Uterus (tissue), 4 donors: ENCODE measurements at regions of chr16 and their contacts with region 1.

Region 1: DNA sequence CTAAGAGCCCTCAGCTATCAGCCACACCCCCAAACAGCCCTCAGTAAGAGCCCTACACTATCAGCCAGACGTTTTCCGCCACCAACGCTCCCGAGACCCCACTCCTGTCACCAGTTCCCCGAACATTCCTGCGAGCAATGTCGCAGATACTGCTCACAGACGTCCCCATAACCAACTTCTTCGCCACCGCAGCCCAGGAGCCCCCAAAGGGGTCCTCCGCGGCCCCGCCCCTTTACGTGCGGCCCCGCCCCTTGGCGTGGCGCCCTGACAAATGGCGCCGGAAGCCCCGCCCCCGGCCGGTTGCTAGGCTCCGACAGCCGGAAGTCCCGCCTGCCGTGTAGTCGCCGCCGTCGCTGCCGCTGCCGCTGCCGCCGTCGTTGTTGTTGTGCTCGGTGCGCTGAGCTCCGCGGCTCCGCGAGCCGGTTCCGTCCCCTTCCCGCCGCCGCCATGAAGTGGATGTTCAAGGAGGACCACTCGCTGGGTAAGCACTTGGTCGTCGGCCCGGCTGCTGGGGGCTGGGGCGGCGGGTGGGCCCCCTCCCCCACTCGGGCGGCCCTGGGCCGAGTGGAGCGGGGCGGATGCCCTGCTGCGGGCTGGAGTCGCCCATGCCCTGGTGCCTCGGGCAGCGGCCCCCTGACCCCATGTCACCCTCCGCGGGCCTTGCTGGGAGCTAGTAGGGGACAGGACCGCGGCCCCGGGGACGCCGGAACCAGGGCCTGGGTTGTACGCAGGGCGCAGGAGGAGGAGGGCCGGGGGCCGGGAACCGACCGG is at the start of gene GABARAPL2:
- DNase-seq: peak; percentile 74 to 86
- H3K4me3 ChIP-seq: peak within 1 kb of the TSS; percentile 79 to 95
- H3K27ac ChIP-seq: peak within 1 kb of the TSS; percentile 76 to 81
- H3K4me1 ChIP-seq: peaks cover 0 to 10% of the 10 kb centered on the region in 2 donors
- H3K27me3 ChIP-seq: no peaks in the 10 kb centered on the region
- CTCF ChIP-seq: no peak
- POLR2A ChIP-seq: peak; percentile 70 to 88
- total RNA-seq, gene GABARAPL2: 19.0 to 95.9 (median 79.5) TPM

Region 2: DNA sequence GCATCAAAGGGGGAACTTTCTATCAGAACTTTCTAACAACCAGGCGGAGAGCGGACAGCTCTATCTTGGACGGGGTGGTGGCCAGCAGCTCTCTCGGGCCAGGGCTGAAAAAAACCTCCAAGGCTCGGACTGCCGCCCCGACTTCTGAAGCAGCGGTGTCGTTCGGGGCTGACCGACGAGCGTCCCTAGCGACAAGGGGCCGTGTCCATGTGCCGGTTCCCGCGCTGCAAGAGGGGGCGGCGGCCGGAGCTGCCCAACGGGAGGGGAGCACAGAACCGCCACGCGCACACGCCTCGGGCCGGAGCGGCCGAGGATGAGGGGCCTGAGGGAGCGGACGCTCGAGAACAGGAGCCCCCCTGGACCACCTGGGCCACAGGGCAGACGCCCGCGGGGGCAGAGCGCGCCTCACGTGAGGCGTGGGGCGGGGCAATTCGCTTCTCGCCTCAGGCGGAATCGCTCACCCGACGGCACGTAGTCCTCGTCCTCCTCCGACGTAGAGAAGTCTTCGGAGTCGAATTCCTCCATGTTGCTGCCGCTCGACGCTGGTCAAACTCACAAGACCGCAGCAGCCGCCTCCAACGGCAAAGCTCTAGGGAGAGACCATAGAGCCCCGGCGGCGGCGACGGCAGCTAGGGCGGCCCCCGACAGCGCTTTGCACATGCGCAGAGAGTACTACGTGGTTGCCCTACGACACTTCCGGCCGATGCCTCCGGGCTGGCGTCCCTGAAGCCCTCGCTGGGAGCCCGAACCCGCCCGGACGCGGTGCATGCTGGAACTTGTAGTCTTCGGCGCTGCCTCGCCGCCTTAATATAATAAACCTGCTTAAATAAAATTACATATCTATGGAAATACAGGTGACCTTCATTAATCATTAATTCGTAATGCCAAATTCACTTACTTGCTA is 133.1 kb before region 1 on chr16 and contains the start of gene CFDP1:
- intact Hi-C with region 1: no loop called
- DNase-seq: peak; percentile 95 to 96
- H3K4me3 ChIP-seq: peak within 1 kb of the TSS; percentile 76 to 83
- H3K27ac ChIP-seq: peak within 1 kb of the TSS; percentile 94 to 99
- H3K4me1 ChIP-seq: no peaks in the 10 kb centered on the region
- H3K27me3 ChIP-seq: no peaks in the 10 kb centered on the region
- CTCF ChIP-seq: peak in 2 of 4 experiments; percentile 7 to 22
- POLR2A ChIP-seq: peak; percentile 72 to 86
- total RNA-seq, gene CFDP1: 22.3 to 90.8 (median 73.4) TPM

Region 3: GRCh38 chr16:75622761-75623605 is 56.8 kb after region 1 on chr16 and contains the start of gene ADAT1:
- intact Hi-C with region 1: loop called (anchors 10 kb)
- DNase-seq: peak; percentile 98
- H3K4me3 ChIP-seq: peak within 1 kb of the TSS; percentile 54 to 59
- H3K27ac ChIP-seq: peak within 1 kb of the TSS; percentile 82 to 94
- H3K4me1 ChIP-seq: no peaks in the 10 kb centered on the region
- H3K27me3 ChIP-seq: no peaks in the 10 kb centered on the region
- CTCF ChIP-seq: peak in 2 of 4 experiments; percentile 20 to 46
- POLR2A ChIP-seq: peak; percentile 79 to 86
- total RNA-seq, gene ADAT1: 21.8 to 72.2 (median 46.5) TPM

Region 4: DNA sequence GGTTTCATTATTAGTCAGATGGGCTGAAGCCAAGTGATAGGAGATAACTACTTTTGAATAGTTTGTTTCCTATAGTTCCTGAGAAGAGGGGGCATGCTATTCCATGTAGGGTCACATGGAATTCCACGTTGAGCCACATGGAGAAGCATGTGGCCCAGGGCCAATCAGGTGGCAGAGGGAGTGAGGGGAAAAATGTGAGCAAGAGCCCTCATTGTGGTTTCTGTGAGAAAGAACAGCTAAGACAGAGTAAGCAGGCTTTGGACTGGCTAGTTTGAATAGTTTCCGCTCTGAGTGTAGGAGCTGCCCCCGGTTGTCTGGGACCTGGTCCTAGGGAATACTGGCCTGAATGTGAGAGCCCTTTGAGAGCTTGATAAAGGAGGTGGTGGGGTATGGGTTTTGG is 641.0 kb after region 1 on chr16:
- intact Hi-C with region 1: no loop called
- DNase-seq: no peak
- H3K4me3 ChIP-seq: no peak overlapping the region
- H3K27ac ChIP-seq: no peak overlapping the region
- H3K4me1 ChIP-seq: no peaks in the 10 kb centered on the region
- H3K27me3 ChIP-seq: no peaks in the 10 kb centered on the region
- CTCF ChIP-seq: no peak
- POLR2A ChIP-seq: no peak